Activated CD8-positive, alpha-beta memory T cell treated with anti-CD3 and anti-CD28 coated beads, Interleukin-2, amount 10 ng/mL, durations not matched to agents 7 days and 5 days (primary cell): ENCODE measurements at regions of chr22 and their contacts with region 1.

Region 1: DNA sequence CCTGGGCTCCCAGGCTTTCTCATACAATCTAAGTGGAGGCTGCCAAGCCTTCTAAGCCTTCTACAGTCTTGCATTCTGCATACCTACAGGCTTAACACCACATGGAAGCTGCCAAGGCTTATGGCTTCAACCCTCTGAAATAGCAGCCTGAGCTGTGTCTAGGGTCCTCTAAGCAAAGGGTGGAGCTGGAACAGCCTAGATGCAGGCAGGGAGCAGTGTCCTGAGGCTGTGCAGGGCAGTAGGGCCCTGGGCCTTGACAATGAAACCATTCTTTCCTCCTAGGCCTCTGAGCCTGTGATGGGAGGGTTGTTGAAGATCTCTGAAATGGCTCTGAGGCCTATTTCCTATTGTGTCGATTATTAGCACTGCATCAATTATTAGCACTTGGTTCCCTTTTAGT is 150.9 kb upstream of the GRK3 start:
- DNase-seq: no peak
- ATAC-seq: no peak
- H3K4me3 Mint-ChIP-seq: no peak overlapping the region
- H3K27ac Mint-ChIP-seq: no peak overlapping the region
- H3K4me1 Mint-ChIP-seq: peaks cover 11% of the 10 kb centered on the region
- H3K27me3 Mint-ChIP-seq: peaks cover 34% of the 10 kb centered on the region

Region 2: GRCh38 chr22:25447686-25448434 is 34.2 kb after region 1 on chr22:
- CTCF ChIA-PET with region 1: interaction called, 12 read pairs
- DNase-seq: peak; percentile 94
- ATAC-seq: peak; percentile 92
- H3K4me3 Mint-ChIP-seq: peak overlapping the region; percentile 83
- H3K27ac Mint-ChIP-seq: peak overlapping the region; percentile 89
- H3K4me1 Mint-ChIP-seq: peaks cover 44% of the 10 kb centered on the region
- H3K27me3 Mint-ChIP-seq: no peaks in the 10 kb centered on the region

Region 3: DNA sequence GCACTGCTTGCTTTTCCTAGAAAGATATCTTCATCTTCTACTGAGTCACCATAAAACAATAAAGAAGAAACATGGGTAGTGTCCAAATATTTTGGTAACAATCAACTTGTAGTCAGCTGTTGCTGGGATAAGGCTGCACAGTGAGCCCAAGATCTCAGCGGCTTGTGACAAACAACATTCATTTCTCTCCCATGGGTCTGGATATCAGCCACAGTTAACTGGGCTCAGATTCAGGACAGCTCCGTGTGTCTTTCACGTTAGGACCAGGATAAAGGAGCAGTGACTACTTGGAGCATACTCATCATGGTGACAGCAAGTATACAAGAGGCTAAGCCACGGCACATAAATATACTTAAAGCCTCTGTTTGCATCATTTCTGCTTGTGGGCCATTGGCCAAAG is 123.0 kb after region 1 on chr22:
- CTCF ChIA-PET with region 1: no interaction called
- DNase-seq: no peak
- ATAC-seq: no peak
- H3K4me3 Mint-ChIP-seq: no peak overlapping the region
- H3K27ac Mint-ChIP-seq: no peak overlapping the region
- H3K4me1 Mint-ChIP-seq: peaks cover 2% of the 10 kb centered on the region
- H3K27me3 Mint-ChIP-seq: peaks cover 5% of the 10 kb centered on the region